Panc1 (cell line): ENCODE measurements at regions of chr5 and their contacts with region 1.

Region 1: GRCh38 chr5:179801274-179802245 is 5.1 kb downstream of the MGAT4B start:
- DNase-seq: no peak
- ATAC-seq: peak; percentile 59
- H3K4me3 ChIP-seq: no peak overlapping the region
- H3K27ac ChIP-seq: peak overlapping the region; percentile 72
- H3K4me1 ChIP-seq: peaks cover 33% of the 10 kb centered on the region
- H3K27me3 ChIP-seq: no peaks in the 10 kb centered on the region
- CTCF ChIP-seq: peak; percentile 92

Region 2: GRCh38 chr5:179827680-179828079 is 26.1 kb after region 1 on chr5:
- CTCF ChIA-PET with region 1: interaction called, 12 read pairs
- POLR2A ChIA-PET with region 1: interaction called, 3 read pairs
- in situ Hi-C with region 1: no loop called
- intact Hi-C with region 1: no loop called
- DNase-seq: no peak
- ATAC-seq: peak; percentile 65
- H3K4me3 ChIP-seq: no peak overlapping the region
- H3K27ac ChIP-seq: peak overlapping the region; percentile 49
- H3K4me1 ChIP-seq: peaks cover 69% of the 10 kb centered on the region
- H3K27me3 ChIP-seq: no peaks in the 10 kb centered on the region
- CTCF ChIP-seq: no peak